Calu3 (cell line): ENCODE measurements at regions of chr22 and their contacts with region 1.

Region 1: GRCh38 chr22:42959576-42960509 is 55.1 kb downstream of the PACSIN2 start:
- DNase-seq: peak; percentile 77
- H3K4me3 Mint-ChIP-seq: peak overlapping the region; percentile 78
- H3K27ac Mint-ChIP-seq: peak overlapping the region; percentile 97
- H3K4me1 Mint-ChIP-seq: peaks cover 84% of the 10 kb centered on the region
- H3K27me3 Mint-ChIP-seq: no peaks in the 10 kb centered on the region
- CTCF ChIP-seq: no peak

Region 2: DNA sequence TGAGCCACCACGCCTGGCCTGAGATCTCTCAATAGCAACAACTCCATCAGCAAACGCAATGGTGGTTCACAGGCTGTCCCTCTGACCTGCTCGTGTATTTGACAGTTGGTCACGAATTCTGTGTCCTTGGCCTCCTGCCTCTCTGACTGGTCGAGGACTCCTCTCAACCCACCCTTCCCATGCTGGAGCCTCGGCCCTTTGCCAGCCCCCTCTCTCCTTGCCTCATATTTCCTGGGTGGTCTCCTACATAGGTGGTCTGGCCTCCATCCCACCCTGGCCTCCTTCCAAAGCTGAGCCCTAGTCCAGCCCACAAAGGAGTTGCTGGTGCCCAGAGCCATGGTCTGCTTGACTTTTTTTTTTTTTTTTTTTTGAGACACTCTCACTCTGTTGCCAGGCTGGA is 227.8 kb before region 1 on chr22:
- CTCF ChIA-PET with region 1: no interaction called
- intact Hi-C with region 1: no loop called
- DNase-seq: no peak
- H3K4me3 Mint-ChIP-seq: no peak overlapping the region
- H3K27ac Mint-ChIP-seq: no peak overlapping the region
- H3K4me1 Mint-ChIP-seq: peaks cover 9% of the 10 kb centered on the region
- H3K27me3 Mint-ChIP-seq: peaks cover 8% of the 10 kb centered on the region
- CTCF ChIP-seq: no peak

Region 3: DNA sequence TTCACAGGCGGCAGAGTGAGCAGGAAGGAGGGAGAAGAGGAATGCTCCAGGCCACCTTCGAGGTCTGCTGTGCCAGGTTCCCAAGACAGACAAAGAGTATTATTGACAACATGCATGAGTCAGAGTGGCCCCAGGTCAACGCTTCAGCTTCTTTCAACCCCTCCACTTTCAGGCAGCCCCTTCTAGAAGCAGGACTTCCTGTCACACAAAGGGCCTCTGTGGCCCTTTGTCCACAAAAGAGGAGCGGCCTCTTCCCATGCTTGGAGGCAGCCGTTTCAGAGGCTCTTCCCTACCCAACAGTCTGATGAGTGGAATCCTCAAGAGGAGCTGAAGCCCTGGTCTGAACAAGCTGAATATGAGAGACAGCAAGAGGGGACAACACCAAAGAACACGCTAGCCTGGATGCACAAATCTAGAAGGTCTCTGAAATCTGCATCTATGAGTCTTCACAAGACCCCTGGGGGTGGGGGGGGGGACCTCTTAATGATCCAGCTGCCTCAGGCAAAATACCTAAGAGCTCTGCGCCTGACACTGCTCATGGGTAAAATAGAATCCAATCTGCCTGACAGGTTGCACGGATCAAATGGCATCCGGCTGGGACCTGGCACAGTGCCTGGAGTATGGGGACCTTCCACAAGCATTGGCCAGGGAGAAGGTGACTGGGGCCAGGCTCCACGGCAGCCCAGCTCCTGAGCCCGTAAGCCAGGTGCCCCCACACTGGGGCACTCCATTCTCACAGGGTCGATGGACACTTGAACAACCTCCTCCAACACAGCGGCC is 12.4 kb before region 1 on chr22:
- CTCF ChIA-PET with region 1: interaction called, 9 read pairs
- intact Hi-C with region 1: loop called (anchors 2 kb)
- DNase-seq: peak; percentile 86
- H3K4me3 Mint-ChIP-seq: peak overlapping the region; percentile 71
- H3K27ac Mint-ChIP-seq: peak overlapping the region; percentile 99
- H3K4me1 Mint-ChIP-seq: peaks cover 94% of the 10 kb centered on the region
- H3K27me3 Mint-ChIP-seq: no peaks in the 10 kb centered on the region
- CTCF ChIP-seq: no peak

Region 4: DNA sequence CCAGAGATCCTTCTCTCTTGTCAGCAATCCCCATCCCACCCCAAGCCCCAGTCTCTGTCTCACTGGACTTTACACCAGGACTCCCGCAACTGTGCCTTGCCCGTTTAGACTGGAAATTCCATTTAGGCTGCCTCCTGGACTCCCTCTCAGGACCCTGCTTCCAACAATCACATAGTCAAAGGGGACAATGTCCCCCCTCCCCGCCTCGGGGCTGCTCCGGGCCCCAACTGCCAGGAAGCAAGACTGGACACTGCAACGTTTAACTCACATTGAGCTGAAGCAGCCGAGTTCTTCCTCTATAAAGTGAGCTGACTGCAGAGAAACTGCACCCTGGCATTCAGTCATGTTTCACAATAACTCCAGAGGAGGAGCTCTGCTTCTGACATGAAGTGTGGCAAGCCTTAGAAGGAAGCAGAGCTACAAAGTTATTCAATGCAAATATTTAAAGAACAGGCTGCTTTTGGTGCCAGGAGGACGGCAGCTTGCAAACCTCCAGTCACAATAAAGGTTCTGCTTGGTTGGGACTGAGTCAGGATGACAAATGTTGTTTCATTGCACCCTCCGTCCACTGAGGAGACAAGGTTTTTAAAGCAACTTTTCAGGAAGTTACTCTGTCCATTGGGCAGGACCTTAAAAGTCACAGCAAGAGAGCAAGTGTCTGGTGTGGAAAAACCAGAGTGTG is 35.2 kb after region 1 on chr22:
- CTCF ChIA-PET with region 1: interaction called, 6 read pairs
- intact Hi-C with region 1: loop called (anchors 5 kb)
- DNase-seq: peak; percentile 70
- H3K4me3 Mint-ChIP-seq: peak overlapping the region; percentile 63
- H3K27ac Mint-ChIP-seq: peak overlapping the region; percentile 76
- H3K4me1 Mint-ChIP-seq: peaks cover 88% of the 10 kb centered on the region
- H3K27me3 Mint-ChIP-seq: no peaks in the 10 kb centered on the region
- CTCF ChIP-seq: no peak